ENCODE measurements at regions of chr12 and their contacts with region 1.

Region 1: GRCh38 chr12:15882118-15882971 is at the start of gene STRAP:
- DNase-seq: peak; percentile 74 to 93 (median 80)
- ATAC-seq: peak; percentile 95
- H3K4me3 ChIP-seq: peak within 1 kb of the TSS; percentile 94
- H3K27ac ChIP-seq: peak within 1 kb of the TSS; percentile 96
- H3K4me1 ChIP-seq: no peaks in the 10 kb centered on the region; a peak in 2 of 5 replicates
- H3K27me3 ChIP-seq: no peaks in the 10 kb centered on the region
- CTCF ChIP-seq: no peak
- EP300 ChIP-seq: no peak
- POLR2A ChIP-seq: peak; percentile 95
- RAD21 ChIP-seq: no peak
- polyA plus RNA-seq, gene STRAP: 85.7 to 131 TPM

Region 2: DNA sequence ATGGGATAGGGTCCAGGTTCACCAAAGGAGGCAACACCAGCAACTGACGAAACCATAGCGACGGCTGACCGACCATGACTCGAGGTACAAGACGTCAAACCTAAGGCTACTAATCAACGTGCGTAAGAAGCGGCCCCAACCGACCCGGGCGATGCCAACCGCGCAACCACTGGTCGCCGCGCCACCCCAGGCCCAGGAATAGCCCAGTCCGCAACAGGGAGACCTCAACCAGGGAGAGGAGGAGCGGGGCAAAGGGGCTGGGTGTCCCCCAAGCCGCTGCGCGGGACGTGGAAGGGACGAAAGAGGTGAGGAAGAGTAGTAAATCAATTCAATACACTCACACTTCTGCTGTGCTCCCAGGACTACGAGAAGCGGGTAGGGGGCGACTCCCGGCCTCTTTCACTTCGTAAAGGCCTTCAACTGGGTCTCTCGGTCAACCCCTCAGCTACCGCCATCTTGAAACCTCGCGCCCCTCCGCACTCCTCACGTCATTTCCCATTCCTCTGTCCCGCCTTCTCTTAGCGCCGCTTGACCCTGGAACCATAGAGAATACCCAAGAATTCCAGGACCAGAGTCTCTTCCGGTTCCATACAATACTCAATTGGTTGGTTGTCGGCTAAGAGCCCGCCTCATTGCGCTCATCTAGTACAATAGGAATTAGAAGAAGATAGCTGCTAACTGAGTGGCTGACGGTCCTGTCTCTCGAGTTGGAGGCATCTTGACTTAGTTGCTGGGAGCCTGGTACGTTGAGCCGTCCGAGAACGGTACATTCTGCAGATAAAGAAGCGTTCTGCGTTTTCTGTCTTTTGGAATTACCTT is 1079.1 kb before region 1 on chr12 and contains the starts of genes C12orf60 and WBP11:
- CTCF ChIA-PET with region 1: no interaction called
- POLR2A ChIA-PET with region 1: interaction called, 3 read pairs
- in situ Hi-C with region 1: loop called (anchors 25 kb)
- intact Hi-C with region 1: no loop called
- DNase-seq: peak; percentile 67 to 94 (median 80)
- ATAC-seq: peak; percentile 99
- H3K4me3 ChIP-seq: peak within 1 kb of the TSS; percentile 90
- H3K27ac ChIP-seq: peak within 1 kb of the TSS; percentile 80
- H3K4me1 ChIP-seq: no peaks in the 10 kb centered on the region
- H3K27me3 ChIP-seq: no peaks in the 10 kb centered on the region
- CTCF ChIP-seq: no peak
- EP300 ChIP-seq: no peak
- POLR2A ChIP-seq: peak; percentile 86
- RAD21 ChIP-seq: no peak
- polyA plus RNA-seq, gene C12orf60: 3.7 to 4.4 TPM
- polyA plus RNA-seq, gene WBP11: 7.7 to 16.2 TPM

Region 3: GRCh38 chr12:15341371-15341770 is 541.0 kb before region 1 on chr12:
- CTCF ChIA-PET with region 1: no interaction called
- POLR2A ChIA-PET with region 1: no interaction called
- in situ Hi-C with region 1: no loop called
- intact Hi-C with region 1: loop called (anchors 10 kb)
- DNase-seq: no peak
- ATAC-seq: no peak
- H3K4me3 ChIP-seq: no peak overlapping the region
- H3K27ac ChIP-seq: no peak overlapping the region
- H3K4me1 ChIP-seq: no peaks in the 10 kb centered on the region
- H3K27me3 ChIP-seq: no peaks in the 10 kb centered on the region
- CTCF ChIP-seq: no peak
- EP300 ChIP-seq: no peak
- POLR2A ChIP-seq: no peak
- RAD21 ChIP-seq: no peak

Measured in K562 (cell line).